ENCODE measurements at regions of chr11 and their contacts with region 1.

Region 1: DNA sequence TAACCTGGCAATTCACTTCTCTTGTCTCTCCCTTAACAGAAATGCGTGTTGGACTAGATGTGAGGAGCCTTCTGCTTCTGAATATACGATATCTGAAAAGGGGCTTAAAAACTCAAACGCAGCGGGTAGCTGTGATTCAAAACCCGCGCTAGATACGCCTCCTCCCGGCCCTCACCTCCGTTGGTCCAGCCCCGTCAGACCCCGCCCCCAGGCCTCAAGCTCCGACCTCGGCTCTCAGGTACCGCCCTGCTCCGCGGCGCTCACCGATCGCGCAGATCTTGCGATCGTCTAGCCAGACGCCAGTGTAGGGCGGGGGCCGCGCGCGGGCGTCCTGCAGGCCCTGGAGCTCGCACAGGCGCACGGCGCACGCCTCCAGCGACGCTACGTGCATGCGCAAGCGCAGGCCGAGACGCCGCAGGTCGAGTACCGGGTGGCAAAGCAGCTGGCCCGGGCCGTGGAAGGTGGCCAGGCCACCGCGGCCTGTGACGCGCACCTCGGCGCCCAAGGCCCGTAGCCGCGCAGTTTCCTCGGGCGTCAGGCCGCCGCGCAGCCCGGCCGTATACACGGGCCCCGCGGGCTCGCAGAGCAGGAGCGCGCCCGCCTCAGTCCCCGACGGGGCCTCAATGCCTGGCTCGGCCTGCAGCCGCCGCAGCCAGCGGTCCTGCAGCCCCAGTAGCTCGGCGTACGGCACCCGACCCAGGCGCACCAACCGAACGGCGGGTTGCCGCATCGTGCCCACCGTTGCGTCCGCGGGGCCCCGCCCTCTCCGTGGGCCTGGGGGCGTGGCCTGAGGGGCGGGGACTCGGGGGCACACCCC is at the start of gene LIPT2:
- DNase-seq: peak; percentile 98 to 99 (median 99)
- ATAC-seq: peak; percentile 99
- H3K4me3 ChIP-seq: peak within 1 kb of the TSS; percentile 85
- H3K27ac ChIP-seq: peak within 1 kb of the TSS; percentile 99
- H3K4me1 ChIP-seq: peaks cover 3% of the 10 kb centered on the region
- H3K27me3 ChIP-seq: no peaks in the 10 kb centered on the region
- total RNA-seq, gene LIPT2: 1.6 to 3.6 (median 2.7) TPM

Region 2: GRCh38 chr11:74559934-74560309 is 66.7 kb after region 1 on chr11:
- intact Hi-C with region 1: loop called in 1 of 4 experiments (anchors 10 kb)
- DNase-seq: no peak
- ATAC-seq: peak in 1 of 2 donors; percentile 56
- H3K4me3 ChIP-seq: no peak overlapping the region
- H3K27ac ChIP-seq: no peak overlapping the region
- H3K4me1 ChIP-seq: no peaks in the 10 kb centered on the region
- H3K27me3 ChIP-seq: no peaks in the 10 kb centered on the region

Region 3: GRCh38 chr11:74748211-74749127 is 255.3 kb after region 1 on chr11 and contains the start of gene RNF169:
- intact Hi-C with region 1: loop called in 1 of 4 experiments (anchors 10 kb)
- DNase-seq: peak; percentile 95 to 98 (median 97)
- ATAC-seq: peak; percentile 100
- H3K4me3 ChIP-seq: peak within 1 kb of the TSS; percentile 97
- H3K27ac ChIP-seq: peak within 1 kb of the TSS; percentile 94
- H3K4me1 ChIP-seq: peaks cover 7% of the 10 kb centered on the region
- H3K27me3 ChIP-seq: no peaks in the 10 kb centered on the region
- total RNA-seq, gene RNF169: 9.9 to 11.6 (median 10.8) TPM

Measured in right cardiac atrium (tissue), 5 donors.